Cardiac septum (tissue), 1 donor: ENCODE measurements at regions of chr4 and their contacts with region 1.

Region 1: GRCh38 chr4:118740869-118741268 is 55.7 kb downstream of the METTL14 start:
- DNase-seq: no peak

Region 2: DNA sequence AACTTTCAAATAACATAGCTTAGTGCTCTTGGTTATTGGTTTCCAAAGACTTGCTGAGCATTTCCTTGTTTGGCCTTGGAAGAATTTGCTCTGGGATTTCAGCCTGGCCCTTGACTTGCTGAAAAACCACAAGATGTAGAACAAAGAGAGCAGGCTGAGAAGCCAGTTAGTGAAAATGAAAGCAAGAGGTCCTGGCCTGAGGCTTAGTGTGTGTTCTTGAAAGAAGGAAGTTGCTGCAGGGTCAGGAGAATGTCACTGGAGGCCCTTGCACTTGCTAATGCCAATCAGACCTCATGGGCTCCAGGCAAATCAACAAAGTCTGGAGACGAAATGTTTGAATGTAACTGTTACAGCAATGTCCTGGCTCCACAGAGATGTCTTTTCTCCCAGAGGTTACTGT is 227.1 kb after region 1 on chr4:
- intact Hi-C with region 1: loop called (anchors 2 kb)
- DNase-seq: no peak